ENCODE measurements at regions of chr7 and their contacts with region 1.

Region 1: DNA sequence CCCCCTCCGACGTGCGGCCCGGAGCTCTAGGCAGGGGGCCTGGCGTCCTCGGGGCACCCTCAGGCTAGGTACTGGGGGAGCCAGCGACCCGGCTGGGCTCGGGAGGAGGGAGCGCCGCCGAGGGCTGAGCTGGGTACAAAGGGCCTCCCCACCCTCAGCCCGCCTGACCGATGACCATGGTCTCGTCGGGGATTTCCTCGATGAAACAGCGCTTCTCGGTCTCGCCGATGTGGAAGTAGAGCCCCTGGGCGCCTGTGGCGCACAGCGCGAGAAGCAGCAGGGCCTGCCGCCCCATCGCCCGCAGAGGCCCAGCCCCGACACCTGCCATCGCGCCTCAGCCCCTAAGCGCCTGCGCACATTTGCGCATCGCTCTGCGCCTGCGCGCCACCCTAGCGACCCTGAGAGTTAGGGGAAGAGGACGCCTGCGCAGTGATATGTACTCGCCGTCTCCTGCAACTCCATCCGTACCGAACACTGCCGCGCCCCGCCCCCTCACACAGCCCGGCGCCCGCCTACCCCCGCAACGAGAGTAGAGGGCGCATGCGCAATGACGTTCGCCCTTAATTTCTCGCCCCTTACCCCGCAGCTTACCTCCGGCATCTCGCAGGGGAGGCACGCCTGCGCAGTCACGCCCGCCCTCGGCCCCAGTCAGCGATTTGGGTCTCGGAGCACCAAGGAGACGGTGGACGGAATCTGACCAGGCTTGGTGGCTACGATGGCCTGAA is at the start of gene TMED4:
- DNase-seq: peak; percentile 100
- ATAC-seq: peak; percentile 90
- H3K4me3 Mint-ChIP-seq: peak within 1 kb of the TSS; percentile 90
- H3K27ac Mint-ChIP-seq: peak within 1 kb of the TSS; percentile 95
- H3K4me1 Mint-ChIP-seq: peaks cover 29% of the 10 kb centered on the region
- H3K27me3 Mint-ChIP-seq: peaks cover 2% of the 10 kb centered on the region
- CTCF ChIP-seq: no peak
- total RNA-seq, gene TMED4: 61.7 and 70.1 TPM in 2 replicates

Region 2: GRCh38 chr7:44490351-44491200 is 91.5 kb before region 1 on chr7 and contains the start of gene NUDCD3:
- CTCF ChIA-PET with region 1: interaction called, 3 read pairs
- POLR2A ChIA-PET with region 1: interaction called, 3 read pairs
- intact Hi-C with region 1: loop called (anchors 1 kb)
- DNase-seq: peak; percentile 80
- ATAC-seq: peak; percentile 84
- H3K4me3 Mint-ChIP-seq: peak within 1 kb of the TSS; percentile 90
- H3K27ac Mint-ChIP-seq: peak within 1 kb of the TSS; percentile 97
- H3K4me1 Mint-ChIP-seq: peaks cover 46% of the 10 kb centered on the region
- H3K27me3 Mint-ChIP-seq: peaks cover 5% of the 10 kb centered on the region
- CTCF ChIP-seq: no peak
- total RNA-seq, gene NUDCD3: 80.7 and 85.1 TPM in 2 replicates

Region 3: GRCh38 chr7:44565097-44565794 is 16.8 kb before region 1 on chr7:
- CTCF ChIA-PET with region 1: interaction called, 9 read pairs
- POLR2A ChIA-PET with region 1: interaction called, 13 read pairs
- intact Hi-C with region 1: no loop called
- DNase-seq: peak; percentile 63
- ATAC-seq: peak; percentile 98
- H3K4me3 Mint-ChIP-seq: no peak overlapping the region
- H3K27ac Mint-ChIP-seq: peak overlapping the region; percentile 50
- H3K4me1 Mint-ChIP-seq: no peaks in the 10 kb centered on the region
- H3K27me3 Mint-ChIP-seq: no peaks in the 10 kb centered on the region
- CTCF ChIP-seq: peak; percentile 55

Region 4: DNA sequence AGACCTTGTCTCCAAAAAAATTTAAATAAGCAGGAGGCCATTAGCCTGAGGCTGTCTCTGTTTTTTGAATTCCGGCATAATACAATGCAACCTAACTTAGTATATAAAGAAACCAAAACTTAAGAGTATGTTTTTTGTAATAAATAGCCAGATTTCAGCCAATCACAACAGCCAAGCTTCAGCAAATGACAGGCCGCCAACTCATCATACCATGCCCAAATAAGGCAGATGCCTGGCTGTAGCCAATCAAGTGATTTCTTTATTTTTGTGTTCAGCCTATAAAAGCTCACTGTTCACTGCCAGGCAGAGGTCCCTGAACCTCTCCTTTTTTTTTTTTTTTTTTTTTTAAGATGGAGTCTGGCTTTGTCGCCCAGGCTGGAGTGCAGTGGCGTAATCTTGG is 316.0 kb after region 1 on chr7:
- CTCF ChIA-PET with region 1: no interaction called
- POLR2A ChIA-PET with region 1: interaction called, 15 read pairs
- intact Hi-C with region 1: no loop called
- DNase-seq: no peak
- ATAC-seq: no peak
- H3K4me3 Mint-ChIP-seq: no peak overlapping the region
- H3K27ac Mint-ChIP-seq: no peak overlapping the region
- H3K4me1 Mint-ChIP-seq: peaks cover 6% of the 10 kb centered on the region
- H3K27me3 Mint-ChIP-seq: no peaks in the 10 kb centered on the region
- CTCF ChIP-seq: no peak

Region 5: GRCh38 chr7:44914992-44915607 is 333.1 kb after region 1 on chr7:
- CTCF ChIA-PET with region 1: no interaction called
- POLR2A ChIA-PET with region 1: interaction called, 4 read pairs
- intact Hi-C with region 1: loop called (anchors 2 kb)
- DNase-seq: peak; percentile 53
- ATAC-seq: peak; percentile 95
- H3K4me3 Mint-ChIP-seq: peak overlapping the region; percentile 41
- H3K27ac Mint-ChIP-seq: peak overlapping the region; percentile 78
- H3K4me1 Mint-ChIP-seq: peaks cover 11% of the 10 kb centered on the region
- H3K27me3 Mint-ChIP-seq: no peaks in the 10 kb centered on the region
- CTCF ChIP-seq: no peak

Region 6: GRCh38 chr7:44980393-44981034 is 398.5 kb after region 1 on chr7:
- CTCF ChIA-PET with region 1: no interaction called
- POLR2A ChIA-PET with region 1: interaction called, 5 read pairs
- intact Hi-C with region 1: loop called (anchors 1 kb)
- DNase-seq: peak; percentile 56
- ATAC-seq: peak; percentile 63
- H3K4me3 Mint-ChIP-seq: peak overlapping the region; percentile 74
- H3K27ac Mint-ChIP-seq: peak overlapping the region; percentile 92
- H3K4me1 Mint-ChIP-seq: peaks cover 86% of the 10 kb centered on the region
- H3K27me3 Mint-ChIP-seq: no peaks in the 10 kb centered on the region
- CTCF ChIP-seq: no peak